BJ (cell line): ENCODE measurements at regions of chr3 and their contacts with region 1.

Region 1: GRCh38 chr3:9067352-9067975 is 104.2 kb upstream of the RAD18 start:
- DNase-seq: no peak
- H3K4me3 ChIP-seq: no peak overlapping the region
- H3K27me3 ChIP-seq: peaks cover 13% of the 10 kb centered on the region
- CTCF ChIP-seq: peak; percentile 98

Region 2: DNA sequence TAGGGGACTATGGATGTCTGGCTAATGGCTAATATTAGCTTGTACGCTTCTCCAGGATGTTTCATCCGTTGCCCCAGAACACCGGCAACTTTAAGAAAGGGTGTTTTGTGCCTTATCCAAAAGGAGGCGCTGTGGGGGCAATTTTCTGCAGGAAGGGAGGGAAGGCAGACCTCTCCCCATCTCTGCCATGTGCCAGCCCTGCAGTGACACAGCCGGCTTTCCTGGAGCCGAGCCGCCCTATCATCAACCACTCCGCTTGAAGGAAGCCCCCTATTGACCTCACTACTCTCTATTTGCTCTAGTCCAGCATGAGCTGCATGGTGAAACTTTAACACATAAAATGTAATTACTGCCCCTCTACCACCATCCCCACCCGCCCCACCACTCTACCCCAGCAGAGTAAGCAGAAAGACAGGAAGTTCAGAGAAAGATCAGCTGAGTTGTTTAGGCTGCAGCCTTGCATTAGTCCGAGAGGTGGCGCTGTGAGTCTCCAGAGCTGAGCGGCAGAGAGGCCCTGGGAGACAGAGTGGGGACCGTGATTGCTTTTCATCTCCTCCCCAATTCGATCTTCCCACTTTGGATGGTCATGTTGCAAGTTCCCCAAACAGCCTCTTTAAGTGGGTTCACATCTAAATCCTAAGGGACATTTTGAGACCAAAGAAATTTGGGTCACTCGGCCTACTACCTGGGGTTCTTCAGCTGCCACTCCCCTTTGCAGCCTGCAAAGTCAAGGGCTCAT is 79.7 kb before region 1 on chr3:
- CTCF ChIA-PET with region 1: interaction called, 15 read pairs
- POLR2A ChIA-PET with region 1: no interaction called
- DNase-seq: no peak
- H3K4me3 ChIP-seq: no peak overlapping the region
- H3K27me3 ChIP-seq: peaks cover 6% of the 10 kb centered on the region; the same call in 1 of the 2 replicates
- CTCF ChIP-seq: peak; percentile 77

Region 3: DNA sequence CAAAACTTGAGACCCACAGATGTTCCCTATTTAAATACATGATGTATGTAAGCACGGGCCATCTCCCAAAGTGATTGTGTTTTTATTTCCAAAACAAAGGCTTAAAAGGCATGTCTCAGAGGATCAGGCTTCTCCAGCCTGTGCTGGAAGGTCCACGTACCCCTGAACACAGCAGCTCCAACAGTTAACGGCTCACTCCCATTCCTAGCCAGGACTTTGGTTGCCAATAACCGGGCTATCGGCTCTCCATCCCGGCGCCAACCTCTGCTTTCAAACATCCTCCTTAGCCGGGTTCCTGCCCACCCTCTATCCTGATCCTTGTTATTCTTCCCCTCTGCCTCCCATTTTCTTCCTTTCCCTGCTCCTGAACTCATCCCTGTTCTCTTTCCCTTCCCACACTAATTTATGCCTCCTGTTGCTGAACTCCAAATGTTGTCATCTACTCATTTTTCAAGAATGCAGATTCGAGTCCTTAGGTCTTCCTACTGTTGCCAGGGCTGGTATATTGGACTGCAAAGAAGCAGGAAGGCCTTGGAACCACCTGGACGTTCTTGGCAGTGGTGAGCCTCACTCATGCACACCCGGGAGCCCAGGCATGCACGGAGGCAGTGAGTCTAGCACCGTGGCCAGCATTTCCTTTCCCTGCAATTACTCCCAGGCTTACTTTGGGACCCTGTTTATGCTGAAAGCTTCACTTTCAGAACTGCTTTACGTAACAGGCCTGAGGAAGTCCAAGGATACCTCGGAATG is 24.2 kb after region 1 on chr3:
- CTCF ChIA-PET with region 1: no interaction called
- POLR2A ChIA-PET with region 1: no interaction called
- DNase-seq: no peak
- H3K4me3 ChIP-seq: no peak overlapping the region
- H3K27me3 ChIP-seq: peaks cover 1% of the 10 kb centered on the region
- CTCF ChIP-seq: no peak